Activated CD8-positive, alpha-beta T cell treated with anti-CD3 and anti-CD28 coated beads for 36 hours (primary cell): ENCODE measurements at regions of chr11 and their contacts with region 1.

Region 1: GRCh38 chr11:65516135-65516935 is 8.5 kb upstream of the SCYL1 start:
- DNase-seq: no peak
- ATAC-seq: peak; percentile 57
- H3K4me3 Mint-ChIP-seq: no peak overlapping the region
- H3K27ac Mint-ChIP-seq: peak overlapping the region; percentile 31
- H3K4me1 Mint-ChIP-seq: peaks cover 11% of the 10 kb centered on the region
- H3K27me3 Mint-ChIP-seq: no peaks in the 10 kb centered on the region
- CTCF ChIP-seq: no peak

Region 2: GRCh38 chr11:65382033-65382807 is 134.1 kb before region 1 on chr11 and contains the start of gene SLC25A45:
- CTCF ChIA-PET with region 1: interaction called, 30 read pairs
- POLR2A ChIA-PET with region 1: interaction called, 3 read pairs
- intact Hi-C with region 1: no loop called
- DNase-seq: peak; percentile 96
- ATAC-seq: peak; percentile 85
- H3K4me3 Mint-ChIP-seq: peak within 1 kb of the TSS; percentile 78
- H3K27ac Mint-ChIP-seq: peak within 1 kb of the TSS; percentile 97
- H3K4me1 Mint-ChIP-seq: peaks cover 44% of the 10 kb centered on the region
- H3K27me3 Mint-ChIP-seq: no peaks in the 10 kb centered on the region
- CTCF ChIP-seq: peak; percentile 91
- total RNA-seq, gene SLC25A45: 12.8 to 14.4 TPM

Region 3: DNA sequence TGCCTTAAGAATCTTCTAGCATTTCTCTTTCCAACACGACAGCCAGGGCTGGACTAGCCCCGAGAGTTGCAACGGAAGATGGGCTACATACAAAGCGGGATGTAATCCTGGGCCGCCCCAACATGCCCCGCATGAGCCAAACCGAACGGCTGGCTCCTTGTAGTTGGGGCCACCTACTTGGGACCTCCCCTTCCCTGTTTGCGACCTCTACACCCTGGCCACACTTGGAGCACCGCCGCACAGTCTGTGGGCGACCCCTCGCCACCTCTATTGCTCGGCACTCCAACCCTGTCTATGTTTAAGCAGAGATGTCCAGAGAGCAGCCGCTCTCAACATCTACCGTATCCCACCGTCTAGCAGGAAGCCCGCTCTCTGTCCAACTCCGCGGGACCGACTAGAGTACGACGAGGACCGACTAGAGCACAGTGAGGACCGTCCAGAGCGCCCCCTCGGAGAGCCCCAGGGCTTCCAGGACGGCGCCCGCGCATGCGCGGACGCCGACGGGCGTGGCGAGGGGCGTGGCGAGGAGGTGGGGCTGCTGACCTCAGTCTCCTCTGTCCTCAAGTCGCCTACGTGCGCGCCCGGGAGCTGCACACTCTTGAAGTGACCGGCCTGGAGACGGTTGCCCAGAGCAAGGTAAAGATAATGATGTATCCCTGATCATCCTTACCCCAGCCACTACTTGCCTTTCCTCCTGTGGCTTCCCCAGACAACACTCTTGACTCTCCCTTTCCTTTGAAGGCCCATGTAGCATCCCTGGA is 61.5 kb before region 1 on chr11:
- CTCF ChIA-PET with region 1: no interaction called
- POLR2A ChIA-PET with region 1: no interaction called
- intact Hi-C with region 1: no loop called
- DNase-seq: peak; percentile 90
- ATAC-seq: peak; percentile 97
- H3K4me3 Mint-ChIP-seq: peak overlapping the region; percentile 95
- H3K27ac Mint-ChIP-seq: peak overlapping the region; percentile 83
- H3K4me1 Mint-ChIP-seq: peaks cover 27% of the 10 kb centered on the region
- H3K27me3 Mint-ChIP-seq: no peaks in the 10 kb centered on the region
- CTCF ChIP-seq: no peak